HCT116 (cell line): ENCODE measurements at regions of chr11 and their contacts with region 1.

Region 1: GRCh38 chr11:10307442-10308207 is 2.8 kb downstream of the ADM start:
- DNase-seq: peak; percentile 84
- ATAC-seq: peak; percentile 41
- H3K4me3 ChIP-seq: peak overlapping the region; percentile 85 to 93
- H3K27ac ChIP-seq: peak overlapping the region; percentile 97
- H3K4me1 ChIP-seq: peaks cover 42 to 64% of the 10 kb centered on the region in 2 experiments
- H3K27me3 ChIP-seq: no peaks in the 10 kb centered on the region
- CTCF ChIP-seq: peak in 2 of 3 experiments; percentile 94 to 98; a peak in 4 of 6 replicates
- POLR2A ChIP-seq: peak; percentile 11
- RAD21 ChIP-seq: no peak

Region 2: GRCh38 chr11:9613118-9613829 is 694.4 kb before region 1 on chr11:
- CTCF ChIA-PET with region 1: interaction called, 5 read pairs
- POLR2A ChIA-PET with region 1: no interaction called
- RAD21 ChIA-PET with region 1: no interaction called
- intact Hi-C with region 1: loop called (anchors 5 kb)
- DNase-seq: peak; percentile 92
- ATAC-seq: peak; percentile 80
- H3K4me3 ChIP-seq: peak overlapping the region; percentile 42 to 58
- H3K27ac ChIP-seq: peak overlapping the region; percentile 92
- H3K4me1 ChIP-seq: peaks cover 29 to 61% of the 10 kb centered on the region in 2 experiments
- H3K27me3 ChIP-seq: no peaks in the 10 kb centered on the region
- CTCF ChIP-seq: peak; percentile 87 to 98 (median 94)
- POLR2A ChIP-seq: no peak
- RAD21 ChIP-seq: peak; percentile 94

Region 3: DNA sequence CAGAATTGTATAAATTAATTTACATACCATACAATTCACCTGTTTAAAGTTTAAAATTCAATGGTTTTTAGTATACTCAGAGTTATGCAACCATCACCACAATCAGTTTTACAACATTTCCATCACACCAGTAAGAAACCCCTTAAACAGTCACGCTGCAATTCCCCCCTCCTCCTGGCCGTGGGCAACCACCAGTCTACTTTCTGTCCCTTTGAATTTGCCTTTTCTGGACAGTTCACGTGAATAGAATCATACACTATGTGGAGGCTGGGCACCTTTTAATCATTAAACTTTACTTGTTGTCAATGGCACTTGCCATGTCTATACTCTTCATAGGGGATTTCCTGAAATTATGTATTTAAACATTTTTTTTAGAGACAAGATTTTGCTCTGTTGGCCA is 663.9 kb before region 1 on chr11:
- CTCF ChIA-PET with region 1: no interaction called
- POLR2A ChIA-PET with region 1: no interaction called
- RAD21 ChIA-PET with region 1: no interaction called
- intact Hi-C with region 1: no loop called
- DNase-seq: no peak
- ATAC-seq: no peak
- H3K4me3 ChIP-seq: no peak overlapping the region
- H3K27ac ChIP-seq: no peak overlapping the region
- H3K4me1 ChIP-seq: no peaks in the 10 kb centered on the region
- H3K27me3 ChIP-seq: no peaks in the 10 kb centered on the region
- CTCF ChIP-seq: no peak
- POLR2A ChIP-seq: no peak
- RAD21 ChIP-seq: no peak

Region 4: GRCh38 chr11:9861860-9862725 is 445.5 kb before region 1 on chr11:
- CTCF ChIA-PET with region 1: no interaction called
- POLR2A ChIA-PET with region 1: no interaction called
- RAD21 ChIA-PET with region 1: no interaction called
- intact Hi-C with region 1: loop called (anchors 1 kb)
- DNase-seq: peak; percentile 31
- ATAC-seq: peak; percentile 98
- H3K4me3 ChIP-seq: no peak overlapping the region
- H3K27ac ChIP-seq: no peak overlapping the region
- H3K4me1 ChIP-seq: no peaks in the 10 kb centered on the region; a peak in 1 of 4 replicates
- H3K27me3 ChIP-seq: no peaks in the 10 kb centered on the region
- CTCF ChIP-seq: peak; percentile 78 to 90 (median 82)
- POLR2A ChIP-seq: no peak
- RAD21 ChIP-seq: peak; percentile 86

Region 5: GRCh38 chr11:10076458-10077141 is 231.0 kb before region 1 on chr11:
- CTCF ChIA-PET with region 1: no interaction called
- POLR2A ChIA-PET with region 1: no interaction called
- RAD21 ChIA-PET with region 1: no interaction called
- intact Hi-C with region 1: loop called (anchors 5 kb)
- DNase-seq: peak; percentile 19
- ATAC-seq: peak; percentile 84
- H3K4me3 ChIP-seq: no peak overlapping the region
- H3K27ac ChIP-seq: no peak overlapping the region
- H3K4me1 ChIP-seq: peaks cover 0 to 3% of the 10 kb centered on the region in 2 experiments; a peak in 1 of 4 replicates
- H3K27me3 ChIP-seq: no peaks in the 10 kb centered on the region
- CTCF ChIP-seq: peak; percentile 27 to 90 (median 80); a peak in 5 of 6 replicates
- POLR2A ChIP-seq: no peak
- RAD21 ChIP-seq: peak; percentile 49

Region 6: GRCh38 chr11:10208131-10208575 is 99.5 kb before region 1 on chr11:
- CTCF ChIA-PET with region 1: interaction called, 4 read pairs
- POLR2A ChIA-PET with region 1: interaction called, 5 read pairs
- RAD21 ChIA-PET with region 1: no interaction called
- intact Hi-C with region 1: loop called (anchors 2 kb)
- DNase-seq: peak; percentile 58
- ATAC-seq: peak; percentile 78
- H3K4me3 ChIP-seq: no peak overlapping the region
- H3K27ac ChIP-seq: no peak overlapping the region
- H3K4me1 ChIP-seq: peaks cover 0 to 8% of the 10 kb centered on the region in 2 experiments; a peak in 1 of 4 replicates
- H3K27me3 ChIP-seq: no peaks in the 10 kb centered on the region
- CTCF ChIP-seq: peak; percentile 54 to 73 (median 57); a peak in 5 of 6 replicates
- POLR2A ChIP-seq: no peak
- RAD21 ChIP-seq: peak; percentile 65

Region 7: GRCh38 chr11:10653926-10654810 is 346.5 kb after region 1 on chr11:
- CTCF ChIA-PET with region 1: no interaction called
- POLR2A ChIA-PET with region 1: no interaction called
- RAD21 ChIA-PET with region 1: no interaction called
- intact Hi-C with region 1: no loop called
- DNase-seq: peak; percentile 55
- ATAC-seq: peak; percentile 36
- H3K4me3 ChIP-seq: 0 out of 4 replicates have a peak overlapping the region, but pooled peaks of 1 of the 2 experiments have one; percentile 3
- H3K27ac ChIP-seq: peak overlapping the region; percentile 100
- H3K4me1 ChIP-seq: peaks cover 98 to 100% of the 10 kb centered on the region in 2 experiments
- H3K27me3 ChIP-seq: no peaks in the 10 kb centered on the region
- CTCF ChIP-seq: peak in 2 of 3 experiments; percentile 72 to 86; a peak in 4 of 6 replicates
- POLR2A ChIP-seq: no peak
- RAD21 ChIP-seq: no peak